Left cardiac atrium (tissue), 4 donors: ENCODE measurements at regions of chr2 and their contacts with region 1.

Region 1: DNA sequence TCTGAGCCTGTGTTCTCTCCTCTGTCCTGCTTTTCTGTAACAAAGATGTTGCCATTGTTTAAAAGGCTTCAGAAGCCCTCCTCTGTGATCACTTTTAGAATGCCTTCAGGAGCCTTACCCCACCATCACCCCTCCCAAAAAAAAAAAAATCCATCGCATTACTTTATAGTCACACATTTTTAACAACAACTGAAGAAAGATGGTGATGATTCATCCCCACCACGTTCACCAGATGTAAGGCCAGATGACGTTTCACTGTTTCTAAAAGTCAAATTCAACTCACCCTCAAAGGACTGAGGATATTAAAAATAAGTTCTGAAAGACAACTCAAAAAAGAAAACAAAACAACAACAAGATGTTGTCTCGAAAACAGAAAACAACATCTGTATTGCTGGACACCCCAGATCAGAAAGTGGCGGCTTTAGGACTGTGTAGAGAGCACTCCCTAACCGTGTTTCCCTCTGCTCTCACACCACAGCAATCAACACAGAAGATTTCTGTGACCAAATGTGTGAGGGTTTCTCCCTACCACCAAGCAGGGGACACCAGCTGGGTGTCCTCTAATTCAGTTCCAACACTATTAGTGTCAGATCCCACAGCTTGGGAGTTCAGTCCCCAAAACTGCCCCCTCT is 61.9 kb upstream of the CREB1 start:
- DNase-seq: no peak
- ATAC-seq: no peak

Region 2: GRCh38 chr2:207149249-207150213 is 318.3 kb before region 1 on chr2:
- intact Hi-C with region 1: no loop called
- DNase-seq: peak; percentile 54
- ATAC-seq: peak; percentile 74 to 86

Region 3: GRCh38 chr2:207176247-207176646 is 291.6 kb before region 1 on chr2:
- intact Hi-C with region 1: loop called in 1 of 2 experiments (anchors 10 kb)
- DNase-seq: no peak
- ATAC-seq: no peak

Region 4: GRCh38 chr2:207341804-207342203 is 126.0 kb before region 1 on chr2:
- intact Hi-C with region 1: loop called in 1 of 2 experiments (anchors 10 kb)
- DNase-seq: no peak
- ATAC-seq: no peak

Region 5: GRCh38 chr2:207362716-207363115 is 105.1 kb before region 1 on chr2:
- intact Hi-C with region 1: no loop called
- DNase-seq: no peak
- ATAC-seq: no peak